Breast epithelium (tissue), 4 donors: ENCODE measurements at regions of chr1 and their contacts with region 1.

Region 1: GRCh38 chr1:214184992-214185391 is 96.0 kb upstream of the SMYD2 start:
- DNase-seq: no peak
- H3K4me3 ChIP-seq: no peak overlapping the region
- H3K27ac ChIP-seq: no peak overlapping the region
- H3K4me1 ChIP-seq: no peaks in the 10 kb centered on the region
- H3K27me3 ChIP-seq: peaks cover 0 to 37% of the 10 kb centered on the region in 2 donors
- CTCF ChIP-seq: no peak
- POLR2A ChIP-seq: no peak

Region 2: DNA sequence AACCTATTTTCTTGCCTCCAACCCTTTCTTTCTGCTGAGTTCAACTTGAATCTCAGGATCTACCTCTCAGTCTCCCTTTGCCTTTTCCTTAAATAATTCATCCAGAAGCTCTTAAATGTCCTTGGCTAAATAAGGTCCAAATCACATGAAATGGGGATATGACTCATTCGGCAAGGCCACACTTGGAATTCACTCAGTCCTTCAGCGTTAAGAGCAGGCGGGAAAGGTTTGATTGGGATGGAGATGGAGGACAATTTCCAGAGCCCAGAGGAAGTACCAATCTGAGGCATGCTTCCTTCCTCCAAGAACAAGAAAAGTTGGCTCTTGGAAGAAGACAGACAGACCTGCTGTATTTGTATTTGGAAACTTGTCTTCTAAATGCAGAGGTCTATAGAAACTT is 68.7 kb before region 1 on chr1:
- intact Hi-C with region 1: no loop called
- DNase-seq: no peak
- H3K4me3 ChIP-seq: no peak overlapping the region
- H3K27ac ChIP-seq: no peak overlapping the region
- H3K4me1 ChIP-seq: no peaks in the 10 kb centered on the region
- H3K27me3 ChIP-seq: no peaks in the 10 kb centered on the region
- CTCF ChIP-seq: no peak
- POLR2A ChIP-seq: no peak

Region 3: DNA sequence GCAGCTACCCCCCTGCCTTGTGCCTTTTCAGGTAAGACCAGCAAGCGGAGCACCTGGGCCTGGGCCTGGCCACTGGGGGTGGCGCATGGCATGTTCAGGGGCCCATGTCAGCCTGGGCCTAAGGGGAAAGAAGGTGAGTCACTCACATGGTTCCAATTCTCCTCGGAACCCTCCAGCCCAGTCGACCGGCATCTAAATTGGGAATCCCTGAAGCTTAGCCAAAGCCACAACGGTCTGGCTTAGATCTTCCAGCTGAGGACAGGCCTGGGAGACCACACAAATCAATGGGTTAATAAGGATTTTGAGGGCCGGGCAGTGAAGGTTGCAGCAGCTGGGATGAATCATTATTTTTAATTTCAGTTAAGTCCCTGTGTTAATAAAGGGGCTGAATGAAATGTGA is 49.1 kb before region 1 on chr1:
- intact Hi-C with region 1: no loop called
- DNase-seq: no peak
- H3K4me3 ChIP-seq: no peak overlapping the region
- H3K27ac ChIP-seq: no peak overlapping the region
- H3K4me1 ChIP-seq: no peaks in the 10 kb centered on the region
- H3K27me3 ChIP-seq: no peaks in the 10 kb centered on the region
- CTCF ChIP-seq: no peak
- POLR2A ChIP-seq: no peak

Region 4: GRCh38 chr1:214213136-214213535 is 28.1 kb after region 1 on chr1:
- intact Hi-C with region 1: no loop called
- DNase-seq: no peak
- H3K4me3 ChIP-seq: no peak overlapping the region
- H3K27ac ChIP-seq: no peak overlapping the region
- H3K4me1 ChIP-seq: no peaks in the 10 kb centered on the region
- H3K27me3 ChIP-seq: no peaks in the 10 kb centered on the region
- CTCF ChIP-seq: no peak
- POLR2A ChIP-seq: no peak

Region 5: GRCh38 chr1:214901718-214902117 is 716.7 kb after region 1 on chr1:
- intact Hi-C with region 1: loop called (anchors 5 kb)
- DNase-seq: no peak
- H3K4me3 ChIP-seq: no peak overlapping the region
- H3K27ac ChIP-seq: no peak overlapping the region
- H3K4me1 ChIP-seq: no peaks in the 10 kb centered on the region
- H3K27me3 ChIP-seq: no peaks in the 10 kb centered on the region
- CTCF ChIP-seq: no peak
- POLR2A ChIP-seq: no peak